Heart right ventricle (tissue), 16 donors: ENCODE measurements at regions of chrX and their contacts with region 1.

Region 1: DNA sequence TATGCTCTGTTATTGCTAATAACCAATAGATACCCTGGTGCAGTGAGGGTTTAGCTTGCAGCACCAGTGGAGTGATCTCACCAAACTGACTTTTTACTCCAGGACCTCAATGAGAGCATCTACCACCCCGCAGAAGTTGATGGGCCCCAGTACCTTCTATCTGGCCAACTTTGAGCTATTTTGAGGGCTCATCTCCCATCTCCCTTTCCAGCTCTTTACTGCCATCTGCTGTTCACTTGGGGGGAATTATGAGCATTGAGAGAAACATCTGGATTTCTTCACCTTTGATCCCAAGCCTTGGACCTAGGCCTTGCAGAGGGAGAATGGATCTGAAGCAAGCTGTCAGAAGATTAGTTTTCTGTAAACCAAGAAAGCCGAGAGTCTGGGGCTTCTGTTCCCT is 143.6 kb downstream of the TMEM164 start:
- DNase-seq: peak in 1 of 2 donors; percentile 20
- ATAC-seq: peak; percentile 52 to 80 (median 68)
- H3K4me3 ChIP-seq: no peak overlapping the region
- H3K27ac ChIP-seq: peak overlapping the region in 1 of 10 donors; percentile 19
- H3K4me1 ChIP-seq: peaks cover 0 to 46% (median 8%) of the 10 kb centered on the region in 9 donors
- H3K27me3 ChIP-seq: no peaks in the 10 kb centered on the region
- CTCF ChIP-seq: peak; percentile 35 to 68 (median 62)

Region 2: DNA sequence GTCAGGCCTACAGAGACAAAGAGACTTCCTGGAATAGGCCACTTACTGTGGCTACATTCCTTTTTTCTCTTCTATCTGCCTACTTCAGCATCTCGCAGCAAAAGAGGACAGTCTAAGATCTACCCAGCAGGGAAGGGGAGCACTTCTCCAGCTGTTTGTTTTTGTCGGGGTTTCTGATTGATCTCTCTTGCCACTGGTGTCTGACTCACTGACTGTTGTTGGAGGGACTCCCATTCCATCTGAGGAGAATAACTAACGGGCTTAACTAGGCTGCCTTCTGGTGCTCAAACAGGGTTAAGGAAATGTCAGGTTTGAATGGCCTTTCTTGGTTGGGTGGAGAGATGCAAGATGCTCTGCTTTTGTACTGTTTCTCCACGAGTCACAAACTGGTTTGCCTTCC is 243.9 kb before region 1 on chrX:
- intact Hi-C with region 1: loop called in 2 of 10 experiments (anchors 5 to 10 kb)
- DNase-seq: no peak
- ATAC-seq: no peak
- H3K4me3 ChIP-seq: no peak overlapping the region
- H3K27ac ChIP-seq: no peak overlapping the region
- H3K4me1 ChIP-seq: no peaks in the 10 kb centered on the region
- H3K27me3 ChIP-seq: peaks cover 0 to 30% (median 0%) of the 10 kb centered on the region in 7 donors
- CTCF ChIP-seq: no peak

Region 3: GRCh38 chrX:109911046-109911445 is 235.5 kb before region 1 on chrX:
- intact Hi-C with region 1: loop called in 8 of 10 experiments (anchors 2 to 10 kb)
- DNase-seq: no peak
- ATAC-seq: no peak
- H3K4me3 ChIP-seq: no peak overlapping the region
- H3K27ac ChIP-seq: no peak overlapping the region
- H3K4me1 ChIP-seq: no peaks in the 10 kb centered on the region
- H3K27me3 ChIP-seq: peaks cover 0 to 48% (median 0%) of the 10 kb centered on the region in 7 donors
- CTCF ChIP-seq: peak in 8 of 9 donors; percentile 20 to 64 (median 53)

Region 4: DNA sequence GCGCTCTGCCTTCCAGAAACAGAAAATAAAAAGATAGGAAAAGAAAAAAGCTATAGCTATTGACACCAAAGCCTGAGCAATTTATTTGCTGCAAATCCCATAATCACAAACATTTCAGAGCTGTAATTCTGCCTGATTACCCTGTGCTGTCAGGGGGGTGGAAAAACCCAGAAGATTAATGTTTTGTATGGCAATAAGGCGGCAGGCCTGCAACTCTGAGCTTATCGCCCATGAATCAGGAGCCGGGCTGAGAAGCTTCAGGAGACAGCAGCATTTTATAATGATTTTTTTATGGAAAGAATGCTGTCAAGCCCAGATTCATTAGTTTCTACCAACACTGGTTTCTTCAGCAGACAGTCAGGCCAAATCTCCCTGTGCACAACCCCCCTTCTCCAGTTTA is 226.2 kb before region 1 on chrX:
- intact Hi-C with region 1: loop called in 2 of 10 experiments (anchors 2 to 5 kb)
- DNase-seq: no peak
- ATAC-seq: no peak
- H3K4me3 ChIP-seq: no peak overlapping the region
- H3K27ac ChIP-seq: no peak overlapping the region
- H3K4me1 ChIP-seq: no peaks in the 10 kb centered on the region
- H3K27me3 ChIP-seq: peaks cover 0 to 21% (median 0%) of the 10 kb centered on the region in 7 donors
- CTCF ChIP-seq: no peak

Region 5: DNA sequence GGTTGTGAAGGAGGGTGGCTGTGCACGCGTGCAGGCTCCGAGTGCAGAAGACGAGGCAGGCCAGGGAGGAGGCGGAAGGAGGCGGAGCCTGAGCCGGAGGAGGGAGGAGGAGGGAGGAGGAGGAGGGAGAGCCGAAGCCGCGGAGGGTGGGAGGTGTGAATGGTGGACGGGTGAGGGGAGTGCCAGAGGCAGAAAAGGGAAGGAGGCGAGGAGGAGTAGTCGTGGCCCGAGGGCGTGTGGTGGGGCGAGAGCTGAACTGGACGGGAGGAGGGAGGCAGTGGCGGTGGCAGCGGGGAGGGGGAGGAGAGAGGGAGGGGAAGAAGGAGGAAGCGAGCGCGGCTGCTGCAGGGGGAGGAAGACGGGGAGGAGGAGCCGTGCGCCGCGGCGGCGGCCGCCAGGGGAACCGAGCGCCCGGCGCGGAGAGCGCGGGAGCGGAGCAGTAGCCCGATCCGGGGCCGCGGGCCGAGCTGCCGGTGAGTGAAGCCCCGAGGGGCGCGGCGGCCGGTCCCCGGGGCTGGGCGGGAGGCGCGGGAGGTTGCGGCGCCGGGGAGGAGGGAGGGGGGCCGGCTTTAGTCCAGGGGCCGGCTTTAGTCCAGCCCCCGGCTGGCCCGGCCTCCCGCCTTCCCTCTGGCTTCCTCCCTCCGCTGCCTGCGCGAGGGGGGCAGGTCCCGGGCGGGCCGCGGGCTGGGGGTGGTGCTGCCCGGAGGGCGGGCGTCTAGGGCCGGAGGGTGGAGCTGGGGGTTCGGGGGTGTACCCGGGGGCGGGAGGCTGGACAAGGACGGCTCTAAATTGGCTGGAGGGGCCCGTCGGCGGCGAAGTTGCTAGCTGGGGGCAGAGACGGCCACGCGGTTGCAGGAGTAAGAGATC is 144.0 kb before region 1 on chrX and contains the start of gene TMEM164:
- intact Hi-C with region 1: loop called in 2 of 10 experiments (anchors 10 kb)
- DNase-seq: peak; percentile 85 to 89
- ATAC-seq: peak; percentile 91 to 97 (median 94)
- H3K4me3 ChIP-seq: peak within 1 kb of the TSS; percentile 25 to 79 (median 68)
- H3K27ac ChIP-seq: peak within 1 kb of the TSS; percentile 79 to 92 (median 88)
- H3K4me1 ChIP-seq: peaks cover 0 to 34% (median 10%) of the 10 kb centered on the region in 9 donors
- H3K27me3 ChIP-seq: peaks cover 0 to 40% (median 0%) of the 10 kb centered on the region in 7 donors
- CTCF ChIP-seq: peak in 3 of 9 donors; percentile 11 to 39 (median 15)
- total RNA-seq, gene TMEM164: 43.0 to 60.6 (median 49.1) TPM

Region 6: GRCh38 chrX:110046001-110046400 is 100.5 kb before region 1 on chrX:
- intact Hi-C with region 1: loop called in 3 of 10 experiments (anchors 10 kb)
- DNase-seq: no peak
- ATAC-seq: peak; percentile 26 to 79 (median 58)
- H3K4me3 ChIP-seq: peak overlapping the region in 1 of 10 donors; percentile 21
- H3K27ac ChIP-seq: peak overlapping the region in 6 of 10 donors; percentile 61 to 81 (median 70)
- H3K4me1 ChIP-seq: peaks cover 0 to 39% (median 10%) of the 10 kb centered on the region in 9 donors
- H3K27me3 ChIP-seq: peaks cover 0 to 5% (median 0%) of the 10 kb centered on the region in 7 donors
- CTCF ChIP-seq: peak in 3 of 9 donors; percentile 13 to 31 (median 18)

Region 7: GRCh38 chrX:110192516-110192915 is 46.0 kb after region 1 on chrX:
- intact Hi-C with region 1: no loop called
- DNase-seq: no peak
- ATAC-seq: no peak
- H3K4me3 ChIP-seq: no peak overlapping the region
- H3K27ac ChIP-seq: no peak overlapping the region
- H3K4me1 ChIP-seq: no peaks in the 10 kb centered on the region
- H3K27me3 ChIP-seq: peaks cover 0 to 12% (median 0%) of the 10 kb centered on the region in 7 donors
- CTCF ChIP-seq: no peak

Region 8: DNA sequence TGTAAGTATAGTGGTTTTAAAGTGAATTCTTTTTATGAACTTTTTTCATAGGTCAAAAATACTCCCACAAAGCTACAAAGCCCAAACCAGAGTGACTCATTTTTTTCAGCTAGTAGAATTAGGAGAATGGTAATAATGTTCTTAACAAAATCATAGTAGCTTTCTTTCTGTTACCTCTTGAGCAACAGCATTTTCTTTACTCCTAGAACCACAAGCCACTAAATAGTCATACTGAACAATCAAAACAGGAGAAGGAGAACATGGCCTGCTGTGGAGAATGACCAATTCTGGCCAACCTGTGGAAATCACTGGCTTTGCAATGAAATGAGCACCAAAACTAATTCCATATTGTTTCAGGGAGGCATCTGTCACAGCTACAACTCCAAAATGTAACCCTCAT is 58.5 kb after region 1 on chrX:
- intact Hi-C with region 1: no loop called
- DNase-seq: no peak
- ATAC-seq: no peak
- H3K4me3 ChIP-seq: no peak overlapping the region
- H3K27ac ChIP-seq: no peak overlapping the region
- H3K4me1 ChIP-seq: no peaks in the 10 kb centered on the region
- H3K27me3 ChIP-seq: peaks cover 0 to 34% (median 0%) of the 10 kb centered on the region in 7 donors
- CTCF ChIP-seq: no peak

Region 9: GRCh38 chrX:111123125-111123524 is 976.6 kb after region 1 on chrX:
- intact Hi-C with region 1: no loop called
- DNase-seq: no peak
- ATAC-seq: no peak
- H3K4me3 ChIP-seq: peak overlapping the region in 1 of 10 donors; percentile 17
- H3K27ac ChIP-seq: no peak overlapping the region
- H3K4me1 ChIP-seq: no peaks in the 10 kb centered on the region
- H3K27me3 ChIP-seq: peaks cover 0 to 49% (median 0%) of the 10 kb centered on the region in 7 donors
- CTCF ChIP-seq: no peak